Posterior cingulate gyrus (tissue), 11 donors: ENCODE measurements at regions of chr2 and their contacts with region 1.

Region 1: DNA sequence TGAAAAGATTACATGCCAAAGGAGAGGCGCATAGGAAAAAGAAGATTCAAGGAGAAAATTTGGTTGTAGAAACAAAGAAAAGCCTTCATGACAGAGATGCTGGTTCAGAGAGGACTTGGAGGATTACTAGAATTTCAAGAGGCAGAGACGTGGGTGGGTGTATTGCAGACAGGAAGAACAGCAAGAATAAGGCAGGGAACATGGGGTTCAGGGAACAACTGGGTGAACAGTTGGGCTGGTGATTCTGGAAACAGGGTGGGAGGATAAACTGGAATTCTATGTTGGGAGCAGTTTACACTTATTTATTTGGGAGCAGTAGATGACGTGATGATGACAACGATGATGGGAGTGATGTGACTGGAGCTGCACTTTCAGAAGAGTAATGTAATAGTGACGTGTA is 18.4 kb upstream of the GMCL1 start:
- DNase-seq: peak in 3 of 10 donors; percentile 21 to 69 (median 41)

Region 2: GRCh38 chr2:69770193-69771146 is 40.5 kb before region 1 on chr2:
- intact Hi-C with region 1: loop called (anchors 5 kb)
- DNase-seq: peak in 1 of 10 donors; percentile 18

Region 3: GRCh38 chr2:69786052-69786560 is 24.9 kb before region 1 on chr2:
- intact Hi-C with region 1: loop called (anchors 2 kb)
- DNase-seq: peak in 2 of 10 donors; percentile 35 to 37

Region 4: DNA sequence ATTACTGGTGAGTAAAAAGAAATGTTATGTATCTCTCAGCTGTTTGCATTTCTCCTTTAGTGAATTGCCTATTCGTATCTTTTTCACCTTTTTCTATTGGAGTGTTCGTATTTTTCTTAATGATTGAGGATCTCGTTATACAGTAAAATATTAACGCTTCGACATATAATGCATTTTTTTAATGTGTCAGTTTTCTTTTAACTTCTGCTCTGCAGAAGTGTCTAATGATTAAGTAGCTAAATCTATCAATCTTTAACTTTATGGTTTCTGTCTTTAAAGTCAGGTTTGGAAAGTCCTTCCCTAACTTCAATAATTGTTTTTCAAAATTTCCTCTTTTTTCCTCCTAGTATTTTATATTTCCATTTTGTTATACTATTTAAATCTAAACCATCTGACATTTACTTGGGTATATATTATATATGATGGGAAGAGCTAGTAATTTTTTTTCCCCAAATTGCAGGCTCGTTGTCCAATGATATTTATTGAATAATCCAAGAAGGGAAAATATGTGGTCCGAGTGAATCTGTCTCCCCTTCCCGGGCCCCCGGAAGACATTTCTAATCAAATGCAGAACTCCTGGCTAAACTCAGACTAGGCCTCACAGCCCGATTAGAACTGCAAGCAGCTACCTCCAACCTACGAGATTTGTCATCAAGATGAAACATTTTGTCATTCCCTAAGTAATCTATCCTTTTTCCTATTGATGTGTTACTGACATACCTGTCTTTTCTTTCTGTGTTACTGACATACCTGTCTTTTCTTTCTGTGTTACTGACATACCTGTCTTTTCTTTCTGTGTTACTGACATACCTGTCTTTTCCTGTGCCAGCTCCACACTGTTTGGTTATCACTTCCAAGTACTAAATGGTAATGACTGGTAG is 293.5 kb after region 1 on chr2:
- intact Hi-C with region 1: no loop called
- DNase-seq: peak in 1 of 10 donors; percentile 74